ENCODE measurements at regions of chr16 and their contacts with region 1.

Region 1: DNA sequence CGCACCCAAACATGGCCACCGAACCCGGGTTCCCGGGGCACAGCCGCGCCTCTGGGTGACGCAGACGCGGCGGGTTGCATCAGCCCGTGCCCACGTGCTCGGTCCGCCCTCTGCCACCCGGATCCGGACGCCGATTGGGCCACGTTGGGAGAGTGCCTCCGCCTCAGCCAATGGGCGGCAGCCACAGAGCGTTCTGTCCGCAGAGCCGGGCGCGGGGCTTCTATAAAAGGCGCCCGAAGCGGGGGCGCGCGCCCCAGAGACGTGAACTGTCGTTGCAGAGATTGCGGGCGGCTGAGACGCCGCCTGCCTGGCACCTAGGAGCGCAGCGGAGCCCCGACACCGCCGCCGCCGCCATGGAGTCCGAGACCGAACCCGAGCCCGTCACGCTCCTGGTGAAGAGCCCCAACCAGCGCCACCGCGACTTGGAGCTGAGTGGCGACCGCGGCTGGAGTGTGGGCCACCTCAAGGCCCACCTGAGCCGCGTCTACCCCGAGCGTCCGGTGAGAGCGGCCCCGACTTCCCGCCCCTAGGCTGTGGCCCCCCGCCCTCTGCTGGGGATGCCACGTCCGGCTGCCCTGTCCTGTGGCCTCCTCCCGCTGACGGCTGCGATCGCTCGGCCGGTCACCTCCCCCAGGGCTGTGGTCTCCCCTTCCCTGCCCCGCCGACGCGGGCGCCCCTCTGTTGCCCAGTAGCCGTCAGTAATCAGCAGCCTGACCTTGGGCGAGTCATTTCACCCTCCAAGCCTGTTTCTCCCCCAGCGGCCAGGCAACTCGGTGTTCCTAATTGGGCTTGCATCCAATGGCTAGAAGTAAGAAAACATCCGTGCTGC is at the start of gene HERPUD1:
- DNase-seq: peak; percentile 99
- H3K4me3 ChIP-seq: peak within 1 kb of the TSS; percentile 86 to 90
- H3K27ac ChIP-seq: peak within 1 kb of the TSS; percentile 98 to 99
- H3K4me1 ChIP-seq: no peaks in the 10 kb centered on the region
- H3K27me3 ChIP-seq: no peaks in the 10 kb centered on the region
- CTCF ChIP-seq: peak in 2 of 4 experiments; percentile 49 to 58
- POLR2A ChIP-seq: peak; percentile 89
- total RNA-seq, gene HERPUD1: 365 to 952 TPM

Region 2: DNA sequence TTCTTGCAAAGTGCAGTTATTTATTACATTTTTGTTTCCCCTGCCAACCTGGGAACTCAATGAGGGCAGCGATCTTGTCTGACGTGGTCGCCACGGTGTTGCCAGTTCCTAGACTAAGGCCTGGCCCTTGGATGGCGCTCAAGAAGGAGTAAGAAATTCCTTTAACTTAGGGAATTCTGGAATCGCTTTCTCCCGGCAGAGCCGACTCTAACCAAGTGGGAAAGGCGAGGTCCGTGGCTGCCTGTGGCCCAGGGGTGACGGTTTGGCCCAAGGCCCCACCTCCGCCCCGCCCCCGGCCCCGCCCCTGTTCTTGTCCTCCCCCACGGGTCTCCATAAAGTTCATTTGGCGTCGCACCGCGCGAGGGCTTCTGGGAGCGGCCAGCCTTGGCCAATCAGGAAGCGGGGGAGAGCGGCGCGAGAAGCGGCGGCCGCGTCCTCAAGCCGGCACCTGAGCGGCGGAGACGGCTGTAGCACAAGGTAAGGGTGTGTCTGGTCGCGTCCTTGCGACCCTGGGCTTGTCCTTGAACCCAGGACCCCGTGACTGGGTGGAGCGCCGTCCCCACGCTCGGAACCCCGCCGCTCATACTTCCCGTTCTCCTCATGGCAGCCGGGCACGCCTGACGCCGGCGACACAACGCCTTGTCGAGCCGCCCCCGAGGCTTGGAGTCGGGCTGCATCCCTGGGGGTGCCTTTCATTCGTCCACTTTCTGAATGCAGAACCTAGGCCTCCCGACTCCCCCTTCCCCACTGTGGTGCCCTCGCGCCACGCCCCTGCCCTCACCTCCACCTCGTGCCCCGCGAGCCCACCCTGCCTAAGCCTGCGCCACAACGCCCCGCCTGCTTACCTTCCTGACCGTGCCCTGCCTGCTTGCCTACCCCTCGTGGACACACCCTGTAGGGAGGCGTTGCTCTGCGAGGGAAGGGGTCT is 202.1 kb before region 1 on chr16 and contains the start of gene NUP93:
- intact Hi-C with region 1: loop called (anchors 10 kb)
- DNase-seq: peak; percentile 89
- H3K4me3 ChIP-seq: peak within 1 kb of the TSS; percentile 62 to 64
- H3K27ac ChIP-seq: peak within 1 kb of the TSS; percentile 70 to 77
- H3K4me1 ChIP-seq: no peaks in the 10 kb centered on the region
- H3K27me3 ChIP-seq: no peaks in the 10 kb centered on the region
- CTCF ChIP-seq: no peak
- POLR2A ChIP-seq: peak; percentile 65
- total RNA-seq, gene NUP93: 38.8 to 73.3 TPM

Region 3: DNA sequence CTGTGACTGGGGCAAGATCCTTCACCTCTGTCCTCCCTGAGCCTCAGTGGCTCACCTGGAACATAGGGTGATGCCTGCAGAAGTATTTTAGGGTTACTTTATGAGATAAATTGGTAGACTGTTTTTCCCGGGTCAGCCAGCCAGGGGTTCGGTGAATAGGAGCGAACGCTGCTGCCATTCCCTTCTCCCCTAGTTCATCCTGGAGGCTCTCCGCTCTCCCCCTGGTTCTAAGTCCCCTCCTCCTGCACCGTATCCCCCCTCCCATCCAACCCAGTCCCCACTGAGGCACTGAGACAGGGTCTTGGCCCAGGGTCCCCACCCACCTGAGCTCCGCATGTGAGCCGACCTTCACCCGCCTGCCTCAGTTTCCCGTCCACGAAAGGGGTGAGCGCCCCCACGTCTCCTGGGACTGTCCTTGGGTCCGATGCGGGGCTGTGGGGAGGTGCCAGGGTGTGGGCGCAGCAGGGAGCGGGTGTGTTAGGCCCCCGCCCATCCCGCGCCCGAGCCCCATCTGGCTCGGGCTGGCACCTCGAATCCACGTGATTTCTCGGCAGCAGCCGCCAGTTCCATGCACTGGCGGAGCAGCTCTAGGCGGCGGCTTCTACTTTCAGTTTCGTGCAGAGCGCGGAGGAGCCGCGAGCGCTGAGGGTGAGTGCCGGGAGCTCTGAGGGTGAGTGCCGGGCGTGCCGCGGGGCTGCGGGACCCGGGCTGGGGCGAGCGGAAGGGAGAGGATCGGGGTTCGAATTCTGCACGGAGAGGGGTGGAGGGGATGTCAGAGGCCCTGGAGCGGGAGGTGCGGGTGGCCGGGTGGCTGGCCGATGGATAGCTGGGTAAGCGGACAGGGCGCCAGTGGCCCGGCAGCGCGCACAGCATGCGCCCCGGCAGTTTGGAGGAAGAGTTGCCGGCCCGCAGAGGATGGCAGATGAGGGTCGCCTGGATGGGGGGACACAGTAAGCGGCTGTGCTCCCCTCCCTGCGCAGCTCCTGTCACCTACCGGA is 57.1 kb after region 1 on chr16 and contains the start of gene NLRC5:
- intact Hi-C with region 1: loop called (anchors 2 kb)
- DNase-seq: peak; percentile 88
- H3K4me3 ChIP-seq: peak within 1 kb of the TSS; percentile 57 to 78
- H3K27ac ChIP-seq: peak within 1 kb of the TSS; percentile 67 to 73
- H3K4me1 ChIP-seq: peaks cover 4% of the 10 kb centered on the region
- H3K27me3 ChIP-seq: no peaks in the 10 kb centered on the region
- CTCF ChIP-seq: no peak
- POLR2A ChIP-seq: peak; percentile 78
- total RNA-seq, gene NLRC5: 9.5 to 31.2 TPM